ENCODE measurements at regions of chr10 and their contacts with region 1.

Region 1: GRCh38 chr10:87734987-87735827 is 75.5 kb downstream of the PAPSS2 start:
- DNase-seq: no peak
- ATAC-seq: peak; percentile 79

Region 2: DNA sequence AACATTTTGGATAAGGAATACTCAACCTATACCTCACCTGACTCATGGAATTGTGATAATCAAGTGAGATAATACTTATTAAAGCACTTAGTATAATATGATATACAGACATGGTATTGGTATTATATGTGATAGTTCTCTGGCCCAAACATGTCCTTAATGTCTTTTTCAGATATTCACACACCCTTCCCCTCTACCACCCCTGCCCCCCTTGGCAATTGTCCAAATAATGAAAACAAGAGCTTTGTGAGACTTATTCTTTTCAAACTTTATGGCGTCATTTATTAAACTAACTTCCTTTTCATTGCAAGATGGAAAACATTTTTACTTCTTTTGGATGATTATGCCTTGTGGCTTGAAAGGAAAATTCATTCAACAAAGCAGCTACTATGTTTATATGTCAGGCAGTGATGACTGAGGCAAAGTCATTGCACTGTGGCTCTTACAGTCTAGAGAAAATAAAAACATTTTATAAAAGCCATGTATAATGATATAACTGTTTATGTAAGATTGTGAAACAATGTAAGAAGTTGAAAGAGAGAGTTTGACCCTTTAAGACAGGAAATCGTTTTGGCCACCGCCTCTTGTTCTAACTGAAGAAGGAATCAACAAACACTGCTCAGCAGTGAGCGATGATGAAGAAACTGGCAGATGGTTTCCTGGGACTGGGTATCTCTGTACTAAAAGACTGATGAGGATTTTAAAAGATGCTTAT is 203.1 kb before region 1 on chr10:
- intact Hi-C with region 1: loop called (anchors 2 kb)
- DNase-seq: no peak
- ATAC-seq: peak; percentile 57

Region 3: DNA sequence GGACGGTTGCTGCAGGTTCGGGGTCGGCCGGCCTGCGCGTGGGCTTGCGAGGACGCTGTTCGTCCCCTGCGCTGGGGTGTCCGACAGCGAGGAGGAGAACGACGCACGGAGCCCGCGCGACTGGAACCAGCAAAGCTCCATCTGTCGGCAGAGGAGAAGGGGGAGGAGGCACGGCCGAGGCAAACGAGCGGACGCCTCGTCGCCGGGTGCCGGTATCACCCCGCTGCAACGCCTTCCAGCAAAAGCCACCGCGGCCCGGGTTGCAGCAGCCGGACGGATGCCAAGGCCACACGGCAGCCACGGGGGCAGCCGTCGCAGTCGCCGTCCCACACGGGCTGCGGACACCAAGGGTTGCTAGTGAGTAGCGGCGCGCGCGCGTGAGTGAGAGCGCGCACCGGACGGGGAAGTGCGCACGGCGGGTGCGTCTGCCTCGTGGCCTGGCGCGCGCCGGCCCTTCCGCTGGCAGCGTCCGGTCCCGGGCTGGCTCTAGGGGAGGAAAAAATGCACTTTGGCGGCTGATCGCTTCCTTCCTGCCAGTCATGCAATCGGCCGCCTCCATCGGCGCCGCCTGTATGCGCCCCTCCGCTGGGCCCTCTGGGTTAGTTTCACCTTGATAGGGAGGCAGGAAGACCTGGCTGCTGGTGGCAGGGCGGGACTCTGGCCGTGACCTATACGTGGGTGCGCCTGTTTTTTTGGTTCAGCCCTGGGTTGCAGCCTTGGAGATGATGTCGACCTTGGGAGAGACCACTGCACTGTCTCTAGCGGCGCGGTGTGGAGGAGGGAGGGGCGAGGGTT is 1145.3 kb after region 1 on chr10:
- intact Hi-C with region 1: no loop called
- DNase-seq: peak; percentile 95
- ATAC-seq: peak; percentile 96

Measured in Right ventricle myocardium inferior (tissue), 1 donor.